Naive thymus-derived CD4-positive, alpha-beta T cell (primary cell): ENCODE measurements at regions of chr9 and their contacts with region 1.

Region 1: GRCh38 chr9:126745574-126746411 is 59.0 kb upstream of the ZBTB43 start:
- DNase-seq: peak in 1 of 9 donors; percentile 18
- ATAC-seq: no peak
- H3K4me3 ChIP-seq: no peak overlapping the region
- H3K4me3 Mint-ChIP-seq: peak overlapping the region in 2 of 10 donors; percentile 22 to 50
- H3K27ac ChIP-seq: no peak overlapping the region
- H3K27ac Mint-ChIP-seq: peak overlapping the region in 8 of 9 donors; percentile 11 to 64 (median 29)
- H3K4me1 ChIP-seq: peaks cover 0 to 9% of the 10 kb centered on the region in 2 donors
- H3K4me1 Mint-ChIP-seq: peaks cover 21 to 40% (median 32%) of the 10 kb centered on the region in 7 donors
- H3K27me3 ChIP-seq: no peaks in the 10 kb centered on the region
- H3K27me3 Mint-ChIP-seq: peaks cover 0 to 10% (median 0%) of the 10 kb centered on the region in 5 donors

Region 2: GRCh38 chr9:126704873-126705766 is 40.7 kb before region 1 on chr9:
- CTCF ChIA-PET with region 1: interaction called, 7 read pairs
- POLR2A ChIA-PET with region 1: interaction called, 3 read pairs
- intact Hi-C with region 1: loop called (anchors 5 kb)
- DNase-seq: peak; percentile 67 to 89 (median 83)
- ATAC-seq: peak; percentile 90
- H3K4me3 ChIP-seq: peak overlapping the region; percentile 38
- H3K4me3 Mint-ChIP-seq: peak overlapping the region; percentile 45 to 79 (median 72)
- H3K27ac ChIP-seq: no peak overlapping the region
- H3K27ac Mint-ChIP-seq: peak overlapping the region in 3 of 9 donors; percentile 30 to 64 (median 43)
- H3K4me1 ChIP-seq: peaks cover 3 to 10% of the 10 kb centered on the region in 2 donors
- H3K4me1 Mint-ChIP-seq: peaks cover 10 to 23% (median 22%) of the 10 kb centered on the region in 7 donors
- H3K27me3 ChIP-seq: no peaks in the 10 kb centered on the region
- H3K27me3 Mint-ChIP-seq: peaks cover 13 to 35% (median 26%) of the 10 kb centered on the region in 5 donors

Region 3: GRCh38 chr9:126773004-126773607 is 27.3 kb after region 1 on chr9:
- CTCF ChIA-PET with region 1: interaction called, 4 read pairs
- POLR2A ChIA-PET with region 1: no interaction called
- intact Hi-C with region 1: loop called in 1 of 2 experiments (anchors 1 kb)
- DNase-seq: no peak
- ATAC-seq: no peak
- H3K4me3 ChIP-seq: no peak overlapping the region
- H3K4me3 Mint-ChIP-seq: no peak overlapping the region
- H3K27ac ChIP-seq: no peak overlapping the region
- H3K27ac Mint-ChIP-seq: no peak overlapping the region
- H3K4me1 ChIP-seq: no peaks in the 10 kb centered on the region
- H3K4me1 Mint-ChIP-seq: peaks cover 0 to 2% (median 0%) of the 10 kb centered on the region in 7 donors
- H3K27me3 ChIP-seq: peaks cover 0 to 5% of the 10 kb centered on the region in 2 donors
- H3K27me3 Mint-ChIP-seq: peaks cover 1 to 45% (median 6%) of the 10 kb centered on the region in 5 donors

Region 4: GRCh38 chr9:127525401-127526187 is 779.8 kb after region 1 on chr9:
- CTCF ChIA-PET with region 1: no interaction called
- POLR2A ChIA-PET with region 1: no interaction called
- intact Hi-C with region 1: no loop called
- DNase-seq: peak in 4 of 9 donors; percentile 20 to 31 (median 26)
- ATAC-seq: peak; percentile 66
- H3K4me3 ChIP-seq: no peak overlapping the region
- H3K4me3 Mint-ChIP-seq: peak overlapping the region in 1 of 10 donors; percentile 32
- H3K27ac ChIP-seq: no peak overlapping the region
- H3K27ac Mint-ChIP-seq: no peak overlapping the region
- H3K4me1 ChIP-seq: no peaks in the 10 kb centered on the region
- H3K4me1 Mint-ChIP-seq: peaks cover 0 to 3% (median 0%) of the 10 kb centered on the region in 7 donors
- H3K27me3 ChIP-seq: no peaks in the 10 kb centered on the region
- H3K27me3 Mint-ChIP-seq: no peaks in the 10 kb centered on the region